Activated B cell treated with CpG ODN at 0.5 μM for 24 hours (primary cell): ENCODE measurements at regions of chr11 and their contacts with region 1.

Region 1: GRCh38 chr11:7513234-7514098 is at the start of gene PPFIBP2:
- DNase-seq: peak; percentile 94
- ATAC-seq: peak; percentile 69
- H3K4me3 Mint-ChIP-seq: peak within 1 kb of the TSS; percentile 92
- H3K27ac Mint-ChIP-seq: peak within 1 kb of the TSS; percentile 97
- H3K4me1 Mint-ChIP-seq: peaks cover 47% of the 10 kb centered on the region
- H3K27me3 Mint-ChIP-seq: no peaks in the 10 kb centered on the region
- CTCF ChIP-seq: no peak
- total RNA-seq, gene PPFIBP2: 109 and 112 TPM in 2 replicates

Region 2: DNA sequence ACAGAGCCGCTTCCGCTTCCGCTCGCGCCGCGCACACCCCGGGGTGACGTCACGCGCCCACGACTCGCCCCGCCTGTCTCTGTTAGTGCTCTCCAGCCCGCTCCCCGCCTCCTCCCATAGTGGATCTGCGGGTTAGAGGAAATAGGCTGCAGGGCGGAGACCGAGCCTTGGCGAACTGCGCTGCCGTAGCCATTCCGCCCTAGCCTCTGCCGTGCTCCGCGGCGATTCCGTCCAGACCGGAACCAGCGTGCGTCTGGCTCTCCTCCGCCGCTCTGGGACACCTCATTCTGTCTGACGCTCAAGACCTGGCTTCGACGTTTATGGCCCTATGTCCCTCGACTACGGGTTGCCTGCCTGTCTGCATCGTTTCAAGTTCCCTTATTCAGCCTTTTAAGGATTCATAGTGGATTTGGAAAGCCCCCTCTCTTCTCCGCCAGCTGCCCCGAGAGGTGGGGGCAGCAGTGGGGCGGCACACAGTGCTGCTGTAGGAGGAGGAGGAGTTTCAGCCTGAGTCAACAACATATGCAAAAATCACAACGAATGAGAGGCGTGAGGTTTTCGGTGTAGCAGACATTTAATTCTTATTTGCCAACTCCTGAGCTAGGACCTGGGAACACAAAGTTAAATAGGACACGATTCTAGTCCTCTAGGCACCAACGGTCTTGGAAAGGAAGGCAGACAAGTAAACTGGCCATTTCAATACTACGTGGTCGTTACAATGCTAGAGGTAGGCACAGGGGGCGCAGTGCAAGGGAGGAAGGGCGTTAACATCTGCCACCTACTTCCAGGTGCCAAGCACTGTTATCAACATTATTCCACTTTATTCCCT is 901.0 kb before region 1 on chr11 and contains the start of gene TAF10:
- CTCF ChIA-PET with region 1: no interaction called
- POLR2A ChIA-PET with region 1: no interaction called
- intact Hi-C with region 1: loop called (anchors 5 kb)
- DNase-seq: peak; percentile 92
- ATAC-seq: peak; percentile 83
- H3K4me3 Mint-ChIP-seq: peak within 1 kb of the TSS; percentile 85
- H3K27ac Mint-ChIP-seq: peak within 1 kb of the TSS; percentile 85
- H3K4me1 Mint-ChIP-seq: peaks cover 29% of the 10 kb centered on the region
- H3K27me3 Mint-ChIP-seq: no peaks in the 10 kb centered on the region
- CTCF ChIP-seq: no peak
- total RNA-seq, gene TAF10: 149 and 154 TPM in 2 replicates

Region 3: GRCh38 chr11:7364660-7365059 is 148.8 kb before region 1 on chr11:
- CTCF ChIA-PET with region 1: no interaction called
- POLR2A ChIA-PET with region 1: no interaction called
- intact Hi-C with region 1: no loop called
- DNase-seq: no peak
- ATAC-seq: no peak
- H3K4me3 Mint-ChIP-seq: no peak overlapping the region
- H3K27ac Mint-ChIP-seq: no peak overlapping the region
- H3K4me1 Mint-ChIP-seq: no peaks in the 10 kb centered on the region
- H3K27me3 Mint-ChIP-seq: no peaks in the 10 kb centered on the region
- CTCF ChIP-seq: no peak

Region 4: GRCh38 chr11:7381937-7382336 is 131.5 kb before region 1 on chr11:
- CTCF ChIA-PET with region 1: no interaction called
- POLR2A ChIA-PET with region 1: interaction called, 3 read pairs
- intact Hi-C with region 1: loop called (anchors 2 kb)
- DNase-seq: no peak
- ATAC-seq: peak; percentile 81
- H3K4me3 Mint-ChIP-seq: no peak overlapping the region
- H3K27ac Mint-ChIP-seq: peak overlapping the region; percentile 27
- H3K4me1 Mint-ChIP-seq: peaks cover 29% of the 10 kb centered on the region
- H3K27me3 Mint-ChIP-seq: peaks cover 20% of the 10 kb centered on the region
- CTCF ChIP-seq: no peak

Region 5: GRCh38 chr11:7501894-7502293 is 11.6 kb before region 1 on chr11:
- CTCF ChIA-PET with region 1: interaction called, 11 read pairs
- POLR2A ChIA-PET with region 1: interaction called, 91 read pairs
- intact Hi-C with region 1: no loop called
- DNase-seq: no peak
- ATAC-seq: no peak
- H3K4me3 Mint-ChIP-seq: no peak overlapping the region
- H3K27ac Mint-ChIP-seq: no peak overlapping the region
- H3K4me1 Mint-ChIP-seq: peaks cover 42% of the 10 kb centered on the region
- H3K27me3 Mint-ChIP-seq: no peaks in the 10 kb centered on the region
- CTCF ChIP-seq: no peak

Region 6: DNA sequence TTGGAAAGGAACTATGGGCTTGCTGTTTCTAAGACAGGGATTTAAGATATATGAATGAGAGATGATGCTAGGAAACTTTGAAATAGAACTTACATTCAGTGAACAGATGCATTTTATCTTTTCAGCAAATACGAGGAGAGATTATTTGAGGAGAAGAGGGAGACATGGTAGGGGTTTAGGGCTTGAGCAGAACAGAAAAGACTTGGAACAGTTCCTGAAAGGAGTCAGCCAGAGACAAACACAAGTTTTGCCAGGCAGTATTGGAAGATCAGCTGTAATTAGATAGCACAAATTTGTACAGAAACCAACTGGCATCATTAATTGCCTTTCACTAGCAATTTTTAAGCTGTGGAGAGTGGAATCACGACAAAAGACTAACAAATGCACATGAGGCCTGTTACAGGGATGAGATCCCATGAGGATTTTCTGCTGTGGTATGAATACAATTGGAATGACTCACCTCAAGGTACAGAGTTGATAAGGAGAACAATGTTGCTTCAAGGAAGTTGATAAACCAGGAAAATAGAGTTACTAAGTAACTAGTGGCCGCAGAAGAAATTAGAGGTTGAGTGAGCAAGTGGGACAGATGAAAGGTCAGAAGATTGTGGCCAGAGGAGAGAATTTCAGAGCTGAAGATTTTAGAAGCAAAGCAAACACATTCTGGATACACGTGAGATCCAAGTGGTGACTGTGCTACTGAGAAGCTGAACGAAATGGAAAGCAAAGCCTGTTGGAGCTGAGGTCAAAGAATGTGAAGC is 91.9 kb after region 1 on chr11:
- CTCF ChIA-PET with region 1: no interaction called
- POLR2A ChIA-PET with region 1: interaction called, 4 read pairs
- intact Hi-C with region 1: loop called (anchors 5 kb)
- DNase-seq: no peak
- ATAC-seq: no peak
- H3K4me3 Mint-ChIP-seq: no peak overlapping the region
- H3K27ac Mint-ChIP-seq: no peak overlapping the region
- H3K4me1 Mint-ChIP-seq: no peaks in the 10 kb centered on the region
- H3K27me3 Mint-ChIP-seq: no peaks in the 10 kb centered on the region
- CTCF ChIP-seq: no peak

Region 7: DNA sequence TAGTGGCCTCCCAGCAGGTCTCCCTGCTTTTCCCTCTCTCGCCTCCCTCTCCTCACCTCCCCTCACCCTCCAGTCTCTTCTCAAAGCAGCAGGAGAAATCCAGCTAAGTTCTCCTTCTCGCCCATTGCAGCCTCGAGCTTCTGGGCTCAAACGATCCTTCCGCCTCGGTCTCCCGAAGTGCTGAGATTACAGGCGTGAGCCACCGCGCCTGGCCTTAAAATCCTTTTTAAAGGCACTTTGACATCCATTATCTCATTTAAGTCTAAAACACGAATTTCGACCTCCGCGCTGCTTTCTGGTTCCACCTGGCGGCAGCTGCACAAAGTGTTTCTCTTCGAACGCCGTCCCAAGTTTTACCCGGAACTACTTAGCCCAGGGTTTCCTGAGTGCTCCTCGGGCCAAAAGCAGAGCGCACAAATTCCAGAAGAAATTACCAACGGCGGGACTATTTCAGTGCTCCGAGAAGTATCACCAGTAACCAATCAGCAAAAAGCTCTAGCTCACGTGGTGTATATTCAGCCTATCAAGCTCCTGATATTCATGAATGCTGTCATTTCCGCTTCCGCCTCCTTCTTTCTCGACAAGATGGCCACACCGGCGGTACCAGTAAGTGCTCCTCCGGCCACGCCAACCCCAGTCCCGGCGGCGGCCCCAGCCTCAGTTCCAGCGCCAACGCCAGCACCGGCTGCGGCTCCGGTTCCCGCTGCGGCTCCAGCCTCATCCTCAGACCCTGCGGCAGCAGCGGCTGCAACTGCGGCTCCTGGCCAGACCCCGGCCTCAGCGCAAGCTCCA is 473.5 kb after region 1 on chr11 and contains the start of gene EIF3F:
- CTCF ChIA-PET with region 1: interaction called, 3 read pairs
- POLR2A ChIA-PET with region 1: no interaction called
- intact Hi-C with region 1: loop called (anchors 5 kb)
- DNase-seq: peak; percentile 73
- ATAC-seq: peak; percentile 97
- H3K4me3 Mint-ChIP-seq: peak within 1 kb of the TSS; percentile 93
- H3K27ac Mint-ChIP-seq: peak within 1 kb of the TSS; percentile 94
- H3K4me1 Mint-ChIP-seq: peaks cover 40% of the 10 kb centered on the region
- H3K27me3 Mint-ChIP-seq: no peaks in the 10 kb centered on the region
- CTCF ChIP-seq: peak; percentile 56
- total RNA-seq, gene EIF3F: 367 and 396 TPM in 2 replicates